Mammary epithelial cell (primary cell): ENCODE measurements at regions of chr3 and their contacts with region 1.

Region 1: GRCh38 chr3:10758304-10759061 is 57.5 kb upstream of the SLC6A11 start:
- DNase-seq: peak; percentile 62
- H3K4me3 ChIP-seq: no peak overlapping the region
- H3K27ac ChIP-seq: peak overlapping the region; percentile 87
- H3K4me1 ChIP-seq: peaks cover 23% of the 10 kb centered on the region
- H3K27me3 ChIP-seq: no peaks in the 10 kb centered on the region
- CTCF ChIP-seq: peak; percentile 75 to 77

Region 2: GRCh38 chr3:10703875-10704274 is 54.6 kb before region 1 on chr3:
- CTCF ChIA-PET with region 1: no interaction called
- dilution Hi-C with region 1: loop called (anchors 5 kb)
- in situ Hi-C with region 1: no loop called
- intact Hi-C with region 1: no loop called
- DNase-seq: peak; percentile 33
- H3K4me3 ChIP-seq: no peak overlapping the region
- H3K27ac ChIP-seq: no peak overlapping the region
- H3K4me1 ChIP-seq: no peaks in the 10 kb centered on the region
- H3K27me3 ChIP-seq: peaks cover 20% of the 10 kb centered on the region
- CTCF ChIP-seq: peak; percentile 63 to 69

Region 3: DNA sequence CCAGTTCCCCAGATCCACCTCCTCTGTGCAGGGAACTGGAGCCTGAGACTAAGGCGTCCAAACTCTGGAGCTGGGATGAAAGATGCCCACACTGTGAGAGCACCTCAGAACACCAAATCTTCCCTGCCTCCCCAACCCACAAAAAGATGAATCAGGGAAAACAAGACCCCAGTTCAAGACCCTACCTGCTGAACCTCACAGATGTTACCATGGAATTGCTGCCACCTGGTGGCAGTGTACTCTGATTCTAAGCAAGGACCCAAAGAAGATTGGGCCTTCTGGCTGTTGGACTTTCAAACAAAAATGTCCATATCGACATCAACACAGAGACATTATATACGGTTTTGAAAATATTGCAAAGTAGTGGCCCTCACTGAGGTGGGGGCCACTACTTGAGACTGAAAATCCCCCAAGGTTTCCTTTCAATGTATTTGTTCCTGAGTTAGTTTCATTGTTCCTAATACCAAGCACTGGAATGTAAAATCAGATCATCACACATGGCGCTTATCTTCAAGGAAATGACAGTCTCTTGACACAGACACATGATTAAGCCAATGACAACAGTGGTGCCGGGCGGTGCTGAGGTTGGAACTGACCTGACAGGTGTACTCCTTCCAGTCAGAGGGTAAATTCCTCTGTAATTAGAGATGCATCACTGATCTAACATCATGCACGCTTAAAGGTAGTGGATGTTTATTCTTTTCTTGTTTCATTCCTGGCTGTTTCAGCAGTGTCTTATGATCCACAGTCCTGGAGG is 125.2 kb after region 1 on chr3:
- CTCF ChIA-PET with region 1: no interaction called
- dilution Hi-C with region 1: no loop called
- in situ Hi-C with region 1: loop called (anchors 5 kb)
- intact Hi-C with region 1: loop called (anchors 1 kb)
- DNase-seq: peak; percentile 43
- H3K4me3 ChIP-seq: no peak overlapping the region
- H3K27ac ChIP-seq: no peak overlapping the region
- H3K4me1 ChIP-seq: peaks cover 23% of the 10 kb centered on the region
- H3K27me3 ChIP-seq: no peaks in the 10 kb centered on the region
- CTCF ChIP-seq: peak; percentile 62 to 72

Region 4: GRCh38 chr3:10983219-10983916 is 224.9 kb after region 1 on chr3:
- CTCF ChIA-PET with region 1: interaction called, 4 read pairs
- dilution Hi-C with region 1: no loop called
- in situ Hi-C with region 1: no loop called
- intact Hi-C with region 1: loop called (anchors 1 kb)
- DNase-seq: peak; percentile 51
- H3K4me3 ChIP-seq: no peak overlapping the region
- H3K27ac ChIP-seq: no peak overlapping the region
- H3K4me1 ChIP-seq: peaks cover 8% of the 10 kb centered on the region
- H3K27me3 ChIP-seq: peaks cover 24% of the 10 kb centered on the region
- CTCF ChIP-seq: peak; percentile 78 to 91

Region 5: DNA sequence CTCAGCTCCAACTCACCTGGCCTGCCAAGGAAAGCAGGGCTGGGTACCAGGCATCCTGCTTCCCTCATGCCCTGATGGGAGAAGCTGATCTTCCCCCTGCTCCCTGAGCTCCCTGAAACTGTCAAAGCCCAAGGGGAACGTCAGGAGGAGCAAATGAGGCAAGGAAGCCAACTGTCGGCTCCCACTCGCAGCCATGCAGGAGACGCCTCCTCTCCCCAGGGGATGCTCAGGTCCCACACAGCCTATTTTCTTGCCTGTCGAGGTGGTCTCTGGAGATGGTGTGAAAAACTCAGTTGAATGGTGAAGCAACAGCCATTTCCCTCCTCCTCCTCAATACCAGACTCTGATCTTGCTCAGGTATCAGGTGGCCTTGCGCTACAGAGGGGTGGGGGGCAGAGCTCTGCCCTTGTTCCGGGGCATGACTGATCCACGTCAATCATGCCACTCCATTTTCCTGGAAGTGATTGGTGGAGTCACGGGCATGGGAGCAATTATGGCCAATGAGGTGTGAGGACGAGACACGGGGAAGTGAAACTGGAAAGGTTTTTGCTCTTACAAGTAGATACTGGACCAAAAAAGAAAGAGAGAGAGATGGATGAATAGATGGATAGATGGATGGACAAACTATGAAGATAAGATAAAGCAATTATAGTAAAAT is 292.3 kb after region 1 on chr3:
- CTCF ChIA-PET with region 1: no interaction called
- dilution Hi-C with region 1: loop called (anchors 25 kb)
- in situ Hi-C with region 1: loop called in 1 of 2 experiments (anchors 5 kb)
- intact Hi-C with region 1: no loop called
- DNase-seq: no peak
- H3K4me3 ChIP-seq: no peak overlapping the region
- H3K27ac ChIP-seq: no peak overlapping the region
- H3K4me1 ChIP-seq: no peaks in the 10 kb centered on the region
- H3K27me3 ChIP-seq: peaks cover 5% of the 10 kb centered on the region
- CTCF ChIP-seq: no peak

Region 6: GRCh38 chr3:11155341-11156025 is 397.0 kb after region 1 on chr3:
- CTCF ChIA-PET with region 1: no interaction called
- dilution Hi-C with region 1: no loop called
- in situ Hi-C with region 1: no loop called
- intact Hi-C with region 1: loop called (anchors 1 kb)
- DNase-seq: peak; percentile 73
- H3K4me3 ChIP-seq: peak overlapping the region; percentile 44 to 60 (median 58)
- H3K27ac ChIP-seq: no peak overlapping the region
- H3K4me1 ChIP-seq: peaks cover 9% of the 10 kb centered on the region
- H3K27me3 ChIP-seq: no peaks in the 10 kb centered on the region
- CTCF ChIP-seq: peak; percentile 88 to 95

Region 7: GRCh38 chr3:11211531-11212298 is 453.2 kb after region 1 on chr3:
- CTCF ChIA-PET with region 1: no interaction called
- dilution Hi-C with region 1: no loop called
- in situ Hi-C with region 1: loop called in 1 of 2 experiments (anchors 25 kb)
- intact Hi-C with region 1: loop called (anchors 1 kb)
- DNase-seq: no peak
- H3K4me3 ChIP-seq: no peak overlapping the region
- H3K27ac ChIP-seq: no peak overlapping the region
- H3K4me1 ChIP-seq: peaks cover 19% of the 10 kb centered on the region
- H3K27me3 ChIP-seq: no peaks in the 10 kb centered on the region
- CTCF ChIP-seq: peak in 1 of 2 donors; percentile 32